Posterior cingulate gyrus (tissue), 11 donors: ENCODE measurements at regions of chr19 and their contacts with region 1.

Region 1: DNA sequence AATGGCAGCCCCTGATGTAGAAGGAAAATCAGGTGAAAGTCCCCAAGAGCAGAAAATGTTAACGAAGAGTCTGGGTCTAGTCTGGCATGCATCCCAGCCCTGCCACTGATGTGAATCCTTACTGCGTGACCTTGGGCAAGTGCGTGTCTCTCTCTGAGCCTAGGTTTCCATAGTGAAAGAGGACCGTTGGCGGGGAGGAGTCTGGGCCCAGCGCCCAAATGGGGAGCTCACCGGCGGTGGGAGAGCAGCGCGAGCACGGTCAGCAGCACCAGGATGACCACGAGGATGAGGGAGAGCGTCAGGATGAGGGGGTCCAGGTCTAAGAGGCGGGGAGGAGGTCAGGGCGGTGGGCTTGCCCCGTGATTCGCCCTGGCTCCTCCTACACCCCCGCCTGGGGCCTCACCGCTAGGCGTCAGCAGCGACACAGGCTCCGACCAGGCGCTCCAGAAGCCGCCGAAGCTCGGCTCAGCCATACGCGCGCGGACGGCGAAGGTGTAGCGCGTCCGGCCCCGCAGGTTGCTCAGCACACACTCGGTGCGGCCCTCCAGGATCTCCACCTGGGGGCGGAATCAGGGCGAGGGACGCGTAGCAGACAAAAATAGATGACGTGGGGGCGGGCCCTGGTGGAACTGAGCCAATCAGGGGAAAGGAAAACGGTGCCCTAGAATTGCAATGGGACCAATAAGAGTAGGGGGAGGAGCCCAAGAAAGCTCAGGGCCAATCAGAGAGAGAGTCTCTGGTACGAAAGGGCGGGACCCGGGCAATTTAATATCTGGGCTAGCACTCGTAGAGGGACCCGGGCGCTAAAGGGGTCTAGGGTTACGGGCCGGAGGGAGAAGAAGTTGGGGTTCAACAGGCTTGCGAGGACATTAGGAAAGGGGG is 3.2 kb downstream of the EPOR start:
- DNase-seq: peak; percentile 88 to 99 (median 94)

Region 2: DNA sequence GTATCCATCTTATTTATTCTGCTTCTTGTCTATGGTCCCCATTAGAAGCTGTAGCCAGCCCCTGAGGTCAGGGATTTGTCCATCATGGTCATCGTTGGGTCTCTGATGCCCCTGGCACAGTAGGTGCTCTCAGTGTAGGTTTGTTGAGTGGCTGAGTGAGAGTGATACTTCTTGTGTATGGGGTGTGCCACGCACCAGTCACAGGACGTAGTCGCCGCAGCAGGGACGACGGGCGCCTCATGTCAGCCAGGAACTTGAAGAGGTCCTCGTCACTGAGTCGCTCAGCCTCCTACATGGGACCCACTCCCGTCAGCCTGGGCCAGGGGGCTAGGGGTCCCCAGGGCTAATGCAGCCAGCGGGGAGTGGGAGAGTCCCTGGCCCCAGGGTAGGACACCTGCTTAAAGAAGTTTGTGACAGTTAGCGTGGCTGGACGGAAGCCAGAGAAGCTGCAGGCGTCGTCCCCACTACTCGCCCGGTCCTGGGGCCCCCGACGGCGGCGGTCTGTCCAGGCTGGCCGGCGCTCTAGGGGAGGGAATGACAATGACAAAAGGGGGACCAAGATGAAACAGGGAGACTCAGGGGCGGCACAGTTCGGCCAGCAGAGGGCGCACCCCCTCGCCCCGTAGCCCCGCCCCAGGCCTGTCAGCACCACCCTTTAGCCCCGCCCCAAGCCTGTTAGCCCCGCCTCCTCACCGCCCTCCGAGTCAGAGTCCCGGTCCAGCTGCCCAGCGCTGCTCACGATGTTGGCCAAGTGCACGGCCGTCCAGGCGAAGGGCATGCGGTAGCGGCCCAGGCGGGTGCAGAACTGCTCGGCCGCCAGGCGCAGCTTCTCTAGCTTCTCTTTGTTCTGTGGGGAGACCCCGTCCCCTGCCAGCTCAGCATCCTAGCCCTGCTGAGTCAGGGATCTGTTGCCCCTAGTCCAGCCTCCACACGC is 137.8 kb before region 1 on chr19:
- intact Hi-C with region 1: no loop called
- DNase-seq: peak; percentile 77 to 98 (median 92)

Region 3: DNA sequence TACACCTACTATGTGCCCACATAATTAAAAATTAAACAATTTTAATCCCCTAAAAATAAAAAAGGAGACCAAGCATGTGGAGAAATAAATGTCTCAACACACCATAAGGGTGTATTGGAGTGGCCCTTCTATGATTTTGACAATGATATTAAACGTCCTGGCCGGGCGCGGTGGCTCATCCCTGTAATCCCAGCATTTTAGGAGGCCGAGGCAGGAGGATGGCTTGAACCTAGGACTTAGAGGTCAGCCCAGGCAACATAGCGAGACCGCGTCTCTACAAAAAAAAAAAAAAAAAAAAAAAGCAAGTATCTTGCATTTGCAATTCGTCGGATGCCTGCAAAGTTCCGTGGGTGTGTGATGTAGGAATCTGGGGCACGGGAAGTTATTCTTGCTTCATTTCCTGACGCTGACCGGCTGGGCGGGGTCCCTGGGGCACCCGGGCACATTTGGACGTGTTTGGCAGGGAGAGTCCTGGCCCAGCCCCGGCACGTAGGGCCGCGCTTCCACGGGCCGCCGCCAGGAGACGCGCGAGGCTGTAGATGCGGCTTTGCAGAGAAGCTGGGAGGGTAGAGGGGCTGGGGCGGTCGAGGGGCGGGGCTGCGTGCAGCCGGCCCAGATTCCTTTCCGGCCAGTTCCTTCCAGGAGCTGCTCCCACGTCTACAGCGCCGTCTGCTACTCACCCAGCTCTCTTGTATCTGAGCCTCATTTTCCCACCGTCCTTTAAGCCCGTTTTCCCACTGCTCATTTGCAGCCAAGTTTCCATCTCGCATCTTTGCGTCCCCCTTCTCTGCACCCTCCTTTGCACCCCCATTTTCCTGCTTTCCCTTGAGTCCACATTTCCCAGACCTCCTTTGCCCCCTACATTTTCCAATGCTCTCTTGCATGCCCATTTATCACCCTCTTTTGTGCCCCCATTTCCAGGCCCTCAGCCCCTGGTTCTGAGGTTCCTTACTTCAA is 87.2 kb before region 1 on chr19:
- intact Hi-C with region 1: loop called (anchors 2 kb)
- DNase-seq: peak; percentile 80 to 98 (median 90)

Region 4: GRCh38 chr19:11435058-11435832 is 54.4 kb after region 1 on chr19 and contains the starts of genes ODAD3 and PRKCSH:
- intact Hi-C with region 1: loop called (anchors 5 kb)
- DNase-seq: peak; percentile 99 to 100 (median 100)

Region 5: DNA sequence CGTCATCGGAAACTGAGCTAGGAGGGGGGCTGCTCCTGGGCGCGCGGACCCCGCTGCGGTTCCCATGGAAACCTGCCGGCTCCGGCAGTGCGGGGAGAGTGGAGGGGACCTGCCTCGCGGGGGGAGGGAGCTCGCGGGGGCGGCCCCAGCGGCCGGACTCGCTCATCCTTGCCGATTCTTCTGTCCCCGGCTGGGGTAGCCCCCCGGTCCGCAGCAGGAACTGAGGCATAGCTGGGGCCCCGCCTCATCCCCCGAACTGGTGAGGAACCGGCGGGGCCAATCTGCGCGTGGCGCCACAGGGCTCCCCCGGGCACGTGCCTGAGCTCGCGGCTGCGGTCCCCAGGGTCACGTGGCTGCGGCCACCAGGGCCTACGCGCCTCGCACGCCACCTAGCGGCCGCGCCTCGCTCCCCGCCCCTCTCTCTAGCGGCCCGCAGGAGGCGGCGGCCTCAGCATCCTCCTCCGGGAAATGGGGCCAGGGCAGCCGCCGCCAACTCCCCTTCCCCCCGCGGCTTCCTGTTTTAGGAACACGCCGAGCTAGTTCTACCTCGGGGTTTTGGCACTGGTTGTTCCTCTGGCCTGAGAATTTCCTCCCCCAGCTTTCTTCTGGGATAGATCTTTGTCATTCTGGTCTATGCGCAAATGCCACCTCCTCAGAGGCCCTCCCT is 101.6 kb after region 1 on chr19:
- intact Hi-C with region 1: loop called (anchors 2 kb)
- DNase-seq: peak; percentile 80 to 98 (median 89)